ENCODE measurements at regions of chr7 and their contacts with region 1.

Region 1: DNA sequence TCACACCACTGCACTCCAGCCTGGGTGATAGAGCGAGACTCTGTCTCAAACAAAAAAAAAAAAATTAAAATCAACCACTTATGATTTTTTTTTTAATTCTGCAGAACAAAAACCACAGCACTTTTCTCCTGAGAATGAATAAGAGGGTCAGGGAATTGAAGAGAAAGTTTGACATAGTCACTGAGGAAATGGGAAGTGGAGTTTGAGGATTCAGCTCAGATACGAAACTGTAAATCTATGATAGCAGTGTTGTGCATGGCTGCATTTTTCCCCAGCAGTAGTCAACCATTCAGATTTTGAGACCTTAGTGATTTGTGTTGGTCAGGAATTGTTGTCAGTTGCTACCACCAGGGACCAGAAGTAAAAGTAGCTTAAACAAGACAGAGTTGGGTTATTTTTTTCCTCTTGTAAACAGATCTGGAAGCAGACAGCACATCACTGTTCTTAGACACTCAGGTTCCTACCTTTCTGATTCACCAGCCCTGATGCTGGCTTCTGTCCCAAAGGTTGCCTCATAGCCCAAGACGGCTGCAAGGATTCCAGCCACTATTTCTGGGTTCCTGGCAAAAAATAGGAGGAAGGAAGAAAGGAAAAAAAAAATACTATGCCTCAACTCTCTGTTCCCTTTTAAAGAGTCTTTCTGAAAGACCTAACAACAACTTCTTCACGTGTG is 20.1 kb downstream of the PILRA start:
- DNase-seq: no peak
- ATAC-seq: no peak
- H3K4me3 ChIP-seq: no peak overlapping the region
- H3K4me3 Mint-ChIP-seq: no peak overlapping the region
- H3K27ac ChIP-seq: no peak overlapping the region
- H3K27ac Mint-ChIP-seq: no peak overlapping the region
- H3K4me1 ChIP-seq: peaks cover 0 to 19% of the 10 kb centered on the region in 2 experiments
- H3K4me1 Mint-ChIP-seq: peaks cover 12 to 25% (median 18%) of the 10 kb centered on the region in 3 donors
- H3K27me3 ChIP-seq: peaks cover 0 to 12% of the 10 kb centered on the region in 2 experiments
- H3K27me3 Mint-ChIP-seq: peaks cover 8 to 10% of the 10 kb centered on the region in 2 donors

Region 2: DNA sequence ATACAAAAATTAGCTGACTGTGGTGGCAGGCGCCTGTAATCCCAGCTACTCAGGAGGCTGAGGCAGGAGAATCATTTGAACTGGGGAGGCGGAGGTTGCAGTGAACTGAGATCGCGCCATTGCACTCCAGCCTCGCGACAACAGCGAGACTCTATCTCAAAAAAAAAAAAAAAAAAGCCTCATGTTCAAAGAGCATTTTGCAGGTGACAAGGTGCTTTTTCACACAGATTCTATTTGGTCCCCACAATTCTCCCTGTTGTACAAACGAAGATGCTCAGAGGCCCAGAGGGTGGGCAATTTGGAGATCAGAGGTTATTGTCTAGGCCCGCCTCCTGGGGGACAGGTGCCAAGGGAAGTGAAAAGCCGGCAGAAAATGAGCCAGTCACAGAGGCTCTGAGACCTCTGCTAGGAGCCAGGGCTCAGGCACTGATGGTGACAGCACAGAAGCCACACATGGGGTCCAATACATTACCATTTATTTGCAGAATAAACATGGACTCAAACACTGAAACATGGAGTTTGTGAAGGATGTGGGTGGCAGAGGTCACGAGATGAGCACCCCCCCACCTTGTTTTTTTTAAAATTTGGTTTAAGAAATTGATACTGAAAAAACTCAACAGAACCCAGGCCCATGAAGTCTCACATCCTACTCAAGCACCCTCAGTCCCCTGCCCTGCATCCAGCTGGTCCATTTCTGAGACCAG is 224.1 kb before region 1 on chr7:
- CTCF ChIA-PET with region 1: no interaction called
- POLR2A ChIA-PET with region 1: interaction called in 1 of 2 experiments, 11 read pairs
- DNase-seq: peak in 7 of 35 experiments; percentile 21 to 60 (median 43)
- ATAC-seq: peak in 2 of 4 experiments; percentile 6 to 31
- H3K4me3 ChIP-seq: no peak overlapping the region
- H3K4me3 Mint-ChIP-seq: peak overlapping the region; percentile 80 to 87 (median 86)
- H3K27ac ChIP-seq: peak overlapping the region; percentile 38
- H3K27ac Mint-ChIP-seq: peak overlapping the region; percentile 98
- H3K4me1 ChIP-seq: peaks cover 43 to 74% of the 10 kb centered on the region in 2 experiments
- H3K4me1 Mint-ChIP-seq: peaks cover 58 to 68% (median 63%) of the 10 kb centered on the region in 3 donors
- H3K27me3 ChIP-seq: peaks cover 0 to 48% of the 10 kb centered on the region in 2 experiments
- H3K27me3 Mint-ChIP-seq: peaks cover 0 to 22% of the 10 kb centered on the region in 2 donors

Region 3: DNA sequence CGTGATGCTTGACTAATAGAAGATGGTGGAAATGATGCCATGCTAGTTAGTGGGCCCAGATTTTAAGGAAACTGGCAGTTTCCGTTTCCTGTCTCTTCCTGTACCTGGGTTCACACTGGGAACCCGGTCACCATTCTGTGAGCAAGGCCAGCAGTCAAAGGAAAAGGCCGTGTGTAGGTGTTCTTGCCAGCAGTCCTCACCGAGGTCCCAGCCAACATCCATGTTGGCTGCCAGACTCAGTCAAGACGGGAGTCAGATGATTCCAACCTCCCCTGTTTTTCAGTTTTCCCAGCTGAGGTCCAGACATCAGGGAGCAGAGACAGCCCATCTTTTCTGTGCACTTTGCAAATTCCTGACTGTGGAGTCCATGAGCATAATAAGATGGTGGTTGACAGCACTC is 50.6 kb before region 1 on chr7:
- CTCF ChIA-PET with region 1: no interaction called
- POLR2A ChIA-PET with region 1: no interaction called
- DNase-seq: no peak
- ATAC-seq: no peak
- H3K4me3 ChIP-seq: no peak overlapping the region
- H3K4me3 Mint-ChIP-seq: no peak overlapping the region
- H3K27ac ChIP-seq: peak overlapping the region; percentile 16
- H3K27ac Mint-ChIP-seq: peak overlapping the region in 1 of 2 donors; percentile 24
- H3K4me1 ChIP-seq: peaks cover 2 to 18% of the 10 kb centered on the region in 2 experiments
- H3K4me1 Mint-ChIP-seq: peaks cover 23 to 47% (median 33%) of the 10 kb centered on the region in 3 donors
- H3K27me3 ChIP-seq: no peaks in the 10 kb centered on the region
- H3K27me3 Mint-ChIP-seq: no peaks in the 10 kb centered on the region

Measured in T-cell (primary cell).